ENCODE measurements at regions of chr2 and their contacts with region 1.

Region 1: GRCh38 chr2:6883448-6884122 is 6.0 kb downstream of the RSAD2 start:
- DNase-seq: no peak
- H3K4me3 ChIP-seq: no peak overlapping the region
- H3K27ac ChIP-seq: no peak overlapping the region
- H3K4me1 ChIP-seq: no peaks in the 10 kb centered on the region
- H3K27me3 ChIP-seq: no peaks in the 10 kb centered on the region
- CTCF ChIP-seq: no peak
- EP300 ChIP-seq: no peak
- POLR2A ChIP-seq: no peak
- RAD21 ChIP-seq: no peak

Region 2: DNA sequence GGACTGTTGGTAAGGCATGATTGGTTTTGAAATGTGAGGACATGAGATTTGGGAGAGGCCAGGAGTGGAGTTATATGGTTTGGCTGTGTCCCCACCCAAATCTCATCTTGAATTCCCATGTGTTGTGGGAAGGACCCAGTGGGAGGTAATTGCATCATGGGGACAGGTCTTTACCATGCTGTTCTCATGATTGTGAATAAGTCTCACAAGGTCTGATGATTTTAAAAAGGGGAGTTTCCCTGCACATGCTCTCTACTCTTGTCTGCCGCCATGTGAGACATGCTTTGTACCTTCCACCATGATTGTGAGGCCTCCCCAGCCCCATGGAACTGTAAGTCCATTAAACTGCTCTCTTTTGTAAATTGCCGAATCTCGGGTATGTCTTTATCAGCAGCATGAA is 23.3 kb before region 1 on chr2:
- CTCF ChIA-PET with region 1: no interaction called
- POLR2A ChIA-PET with region 1: no interaction called
- DNase-seq: no peak
- H3K4me3 ChIP-seq: no peak overlapping the region
- H3K27ac ChIP-seq: no peak overlapping the region
- H3K4me1 ChIP-seq: peaks cover 0 to 2% (median 0%) of the 10 kb centered on the region in 4 experiments; a peak in 2 of 7 replicates
- H3K27me3 ChIP-seq: peaks cover 9 to 18% (median 17%) of the 10 kb centered on the region in 4 experiments
- CTCF ChIP-seq: no peak
- EP300 ChIP-seq: no peak
- POLR2A ChIP-seq: no peak
- RAD21 ChIP-seq: no peak

Region 3: DNA sequence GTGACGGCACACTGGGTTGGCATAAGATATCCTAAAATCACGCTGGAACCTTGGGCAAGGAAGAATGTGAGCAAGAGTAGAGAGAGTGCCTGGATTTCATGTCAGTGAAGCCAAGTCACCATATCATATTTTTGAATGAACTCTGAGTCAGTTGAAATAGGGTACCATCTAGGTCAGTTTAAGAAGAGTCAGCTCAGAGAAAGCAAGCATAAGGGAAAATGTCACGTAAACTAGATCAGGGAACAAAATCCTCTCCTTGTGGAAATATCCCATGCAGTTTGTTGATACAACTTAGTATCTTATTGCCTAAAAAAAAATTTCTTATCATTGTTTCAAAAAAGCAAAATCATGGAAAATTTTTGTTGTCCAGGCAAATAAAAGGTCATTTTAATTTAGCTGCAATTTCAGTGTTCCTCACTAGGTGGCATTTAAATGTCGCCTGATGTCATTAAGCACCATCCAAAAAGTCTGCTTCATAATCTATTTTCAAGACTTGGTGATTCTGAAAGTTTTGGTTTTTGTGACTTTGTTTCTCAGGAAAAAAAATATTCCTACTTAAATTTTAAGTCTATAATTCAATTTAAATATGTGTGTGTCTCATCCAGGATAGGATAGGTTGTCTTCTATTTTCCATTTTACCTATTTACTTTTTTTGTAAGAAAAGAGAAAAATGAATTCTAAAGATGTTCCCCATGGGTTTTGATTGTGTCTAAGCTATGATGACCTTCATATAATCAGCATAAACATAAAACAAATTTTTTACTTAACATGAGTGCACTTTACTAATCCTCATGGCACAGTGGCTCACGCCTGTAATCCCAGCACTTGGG is 13.6 kb after region 1 on chr2:
- CTCF ChIA-PET with region 1: interaction called, 23 read pairs
- POLR2A ChIA-PET with region 1: no interaction called
- DNase-seq: no peak
- H3K4me3 ChIP-seq: no peak overlapping the region
- H3K27ac ChIP-seq: no peak overlapping the region
- H3K4me1 ChIP-seq: no peaks in the 10 kb centered on the region
- H3K27me3 ChIP-seq: no peaks in the 10 kb centered on the region
- CTCF ChIP-seq: peak in 2 of 3 experiments; percentile 39 to 52; a peak in 2 of 4 replicates
- EP300 ChIP-seq: no peak
- POLR2A ChIP-seq: no peak
- RAD21 ChIP-seq: peak; percentile 63 to 66

Measured in H1 (cell line).